PC-3 (cell line): ENCODE measurements at regions of chr9 and their contacts with region 1.

Region 1: DNA sequence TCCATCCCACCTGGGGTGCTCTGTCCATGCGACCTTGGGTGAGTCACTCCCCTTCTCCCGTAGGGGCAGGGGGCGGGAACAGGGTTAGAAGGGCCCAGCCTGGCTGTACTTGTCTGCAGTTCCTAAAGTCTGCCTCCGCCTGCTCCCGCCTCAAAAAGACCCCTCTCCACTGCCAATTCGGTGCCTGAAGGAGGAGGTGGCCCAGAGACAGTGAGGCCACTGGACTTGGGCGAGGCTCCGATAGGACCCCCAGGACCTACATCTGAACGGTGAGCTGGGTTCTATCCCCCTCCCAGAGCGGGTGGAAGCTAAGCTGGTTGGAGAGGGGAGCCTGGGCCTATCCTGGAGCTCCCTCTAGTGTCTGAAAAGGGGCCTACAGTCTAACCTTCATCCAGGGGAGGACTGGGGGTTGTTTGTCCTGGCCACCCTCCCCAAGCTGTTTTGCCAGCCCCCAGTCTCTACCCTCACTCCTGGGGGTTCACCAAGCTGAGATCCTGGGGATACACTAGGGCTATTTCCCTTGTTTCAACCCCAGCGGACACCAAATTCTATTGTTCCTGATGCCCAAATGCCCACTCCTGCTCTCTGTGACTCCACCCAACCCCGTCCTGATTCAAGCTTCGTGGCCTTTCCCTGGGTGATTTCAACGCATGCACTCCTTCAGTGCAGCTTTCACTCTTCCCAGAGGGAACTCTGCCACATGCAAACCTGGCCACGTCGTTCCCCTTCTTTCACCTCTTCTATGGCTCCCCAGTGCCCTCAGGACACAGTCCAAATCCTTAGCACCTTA is 6.1 kb upstream of the CRB2 start:
- DNase-seq: peak; percentile 69
- ATAC-seq: peak; percentile 68
- H3K4me3 ChIP-seq: no peak overlapping the region
- H3K27ac ChIP-seq: no peak overlapping the region
- H3K4me1 ChIP-seq: no peaks in the 10 kb centered on the region
- H3K27me3 ChIP-seq: no peaks in the 10 kb centered on the region
- CTCF ChIP-seq: peak; percentile 83

Region 2: GRCh38 chr9:123081824-123082223 is 268.1 kb before region 1 on chr9:
- CTCF ChIA-PET with region 1: interaction called, 3 read pairs
- POLR2A ChIA-PET with region 1: no interaction called
- intact Hi-C with region 1: loop called (anchors 2 kb)
- DNase-seq: peak; percentile 42
- ATAC-seq: no peak; the same call in 1 of the 2 replicates
- H3K4me3 ChIP-seq: no peak overlapping the region
- H3K27ac ChIP-seq: no peak overlapping the region
- H3K4me1 ChIP-seq: peaks cover under 1% of the 10 kb centered on the region; the same call in 1 of the 2 replicates
- H3K27me3 ChIP-seq: no peaks in the 10 kb centered on the region
- CTCF ChIP-seq: peak; percentile 65

Region 3: DNA sequence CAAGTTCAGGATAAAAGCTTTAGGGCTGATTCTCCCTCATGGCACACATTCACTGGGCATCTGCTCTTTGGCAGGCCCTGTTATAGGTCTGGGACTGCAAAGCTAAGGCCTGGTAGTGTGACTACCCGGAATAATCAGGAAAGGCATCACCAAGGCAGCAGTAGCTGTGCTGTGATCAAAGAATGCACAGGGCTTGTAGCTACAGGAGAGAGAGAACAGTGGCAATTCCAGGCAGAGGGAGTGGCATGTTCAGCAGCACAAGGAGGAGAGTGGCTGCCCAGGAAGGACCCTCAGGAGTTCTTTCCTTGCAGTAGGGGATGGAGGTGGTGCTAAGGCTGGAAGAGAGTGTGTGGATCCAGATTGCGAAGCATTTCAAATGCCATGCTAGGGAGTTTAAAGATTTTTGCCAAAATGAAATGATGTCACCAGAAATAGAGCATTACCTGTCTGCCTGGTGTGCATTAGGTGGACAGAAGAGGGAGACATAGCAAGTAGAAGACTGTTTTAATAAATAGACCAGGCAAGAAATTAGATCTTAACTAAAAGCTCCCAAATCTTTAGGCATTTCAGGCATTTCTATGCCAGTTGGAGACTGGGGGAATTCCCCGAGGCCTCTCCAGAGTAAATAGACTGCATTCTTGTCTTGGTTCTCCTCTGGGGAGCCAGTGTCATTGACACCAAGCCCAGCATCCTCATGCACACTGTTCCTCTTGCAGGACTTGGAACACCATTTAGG is 247.3 kb before region 1 on chr9:
- CTCF ChIA-PET with region 1: interaction called, 10 read pairs
- POLR2A ChIA-PET with region 1: no interaction called
- intact Hi-C with region 1: loop called (anchors 5 kb)
- DNase-seq: peak; percentile 6
- ATAC-seq: no peak
- H3K4me3 ChIP-seq: no peak overlapping the region
- H3K27ac ChIP-seq: no peak overlapping the region
- H3K4me1 ChIP-seq: no peaks in the 10 kb centered on the region
- H3K27me3 ChIP-seq: no peaks in the 10 kb centered on the region
- CTCF ChIP-seq: peak; percentile 51

Region 4: DNA sequence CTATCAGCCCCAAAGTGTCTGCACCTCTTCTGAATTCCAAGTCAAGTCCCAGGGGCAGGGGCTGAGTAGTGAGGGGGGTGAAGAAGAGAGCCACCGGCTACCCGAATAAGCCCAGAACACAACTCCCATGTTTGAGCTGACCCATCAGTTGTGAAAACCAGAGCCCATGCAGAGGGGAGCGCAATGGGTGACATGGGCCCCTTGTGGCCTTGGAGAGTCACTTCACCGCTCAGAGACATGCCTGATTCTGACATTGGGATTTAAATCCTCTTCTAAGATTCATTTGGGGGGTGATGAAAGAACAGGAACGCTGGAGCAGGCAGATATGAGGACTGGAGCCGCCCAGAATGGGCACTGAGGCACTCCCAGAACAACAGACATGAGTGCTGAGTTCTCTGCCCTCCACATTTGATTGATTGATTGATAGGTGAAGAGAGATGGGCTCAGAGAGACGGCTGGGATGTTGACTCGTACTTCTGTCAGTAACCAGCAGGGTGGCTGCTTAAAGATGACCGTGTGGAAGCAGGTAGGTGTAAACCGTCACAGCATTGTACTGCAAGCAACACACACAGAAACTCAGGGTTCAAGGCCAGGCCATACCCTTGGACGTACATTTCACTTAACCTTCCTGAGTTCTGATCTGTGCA is 242.1 kb before region 1 on chr9:
- CTCF ChIA-PET with region 1: interaction called, 10 read pairs
- POLR2A ChIA-PET with region 1: no interaction called
- intact Hi-C with region 1: loop called (anchors 5 kb)
- DNase-seq: no peak
- ATAC-seq: no peak
- H3K4me3 ChIP-seq: no peak overlapping the region
- H3K27ac ChIP-seq: no peak overlapping the region
- H3K4me1 ChIP-seq: no peaks in the 10 kb centered on the region
- H3K27me3 ChIP-seq: no peaks in the 10 kb centered on the region
- CTCF ChIP-seq: no peak

Region 5: GRCh38 chr9:123302348-123303214 is 47.3 kb before region 1 on chr9:
- CTCF ChIA-PET with region 1: no interaction called
- POLR2A ChIA-PET with region 1: no interaction called
- intact Hi-C with region 1: no loop called
- DNase-seq: no peak
- ATAC-seq: no peak
- H3K4me3 ChIP-seq: no peak overlapping the region
- H3K27ac ChIP-seq: no peak overlapping the region
- H3K4me1 ChIP-seq: no peaks in the 10 kb centered on the region
- H3K27me3 ChIP-seq: no peaks in the 10 kb centered on the region
- CTCF ChIP-seq: no peak

Region 6: GRCh38 chr9:123389070-123389469 is 39.2 kb after region 1 on chr9:
- CTCF ChIA-PET with region 1: interaction called, 15 read pairs
- POLR2A ChIA-PET with region 1: no interaction called
- intact Hi-C with region 1: loop called (anchors 1 kb)
- DNase-seq: no peak
- ATAC-seq: no peak
- H3K4me3 ChIP-seq: no peak overlapping the region
- H3K27ac ChIP-seq: no peak overlapping the region
- H3K4me1 ChIP-seq: no peaks in the 10 kb centered on the region
- H3K27me3 ChIP-seq: no peaks in the 10 kb centered on the region
- CTCF ChIP-seq: no peak

Region 7: GRCh38 chr9:123445981-123446610 is 96.2 kb after region 1 on chr9:
- CTCF ChIA-PET with region 1: no interaction called
- POLR2A ChIA-PET with region 1: no interaction called
- intact Hi-C with region 1: no loop called
- DNase-seq: no peak
- ATAC-seq: no peak
- H3K4me3 ChIP-seq: no peak overlapping the region
- H3K27ac ChIP-seq: no peak overlapping the region
- H3K4me1 ChIP-seq: no peaks in the 10 kb centered on the region
- H3K27me3 ChIP-seq: no peaks in the 10 kb centered on the region
- CTCF ChIP-seq: no peak